PC-3 (cell line): ENCODE measurements at regions of chr2 and their contacts with region 1.

Region 1: GRCh38 chr2:168758970-168759820 is 43.2 kb upstream of the NOSTRIN start:
- DNase-seq: peak; percentile 71
- ATAC-seq: peak; percentile 92
- H3K4me3 ChIP-seq: no peak overlapping the region
- H3K27ac ChIP-seq: no peak overlapping the region
- H3K4me1 ChIP-seq: no peaks in the 10 kb centered on the region
- H3K27me3 ChIP-seq: no peaks in the 10 kb centered on the region
- CTCF ChIP-seq: peak; percentile 73

Region 2: GRCh38 chr2:168375195-168375798 is 383.9 kb before region 1 on chr2:
- CTCF ChIA-PET with region 1: no interaction called
- POLR2A ChIA-PET with region 1: no interaction called
- intact Hi-C with region 1: loop called (anchors 1 kb)
- DNase-seq: peak; percentile 45
- ATAC-seq: no peak
- H3K4me3 ChIP-seq: no peak overlapping the region
- H3K27ac ChIP-seq: no peak overlapping the region
- H3K4me1 ChIP-seq: no peaks in the 10 kb centered on the region
- H3K27me3 ChIP-seq: no peaks in the 10 kb centered on the region
- CTCF ChIP-seq: peak; percentile 72

Region 3: DNA sequence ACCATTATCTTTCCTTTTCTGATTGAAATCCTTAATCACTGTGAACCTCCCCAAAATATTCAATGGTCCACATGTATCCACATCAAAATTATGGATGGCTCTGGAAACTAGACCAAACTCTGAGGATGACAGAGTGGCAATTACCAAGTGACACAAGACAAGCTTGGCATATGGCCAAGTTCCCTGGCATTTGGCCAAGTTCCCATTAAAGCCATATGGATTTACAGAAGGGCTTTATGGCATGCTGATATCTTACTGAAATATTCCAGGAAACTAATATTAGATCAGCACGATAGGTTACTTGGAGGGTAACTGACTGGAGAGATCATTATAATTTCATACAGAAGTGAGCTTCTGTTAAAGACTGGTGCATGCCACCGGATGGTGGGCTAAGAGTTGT is 325.0 kb before region 1 on chr2:
- CTCF ChIA-PET with region 1: no interaction called
- POLR2A ChIA-PET with region 1: no interaction called
- intact Hi-C with region 1: loop called (anchors 10 kb)
- DNase-seq: peak; percentile 12
- ATAC-seq: no peak
- H3K4me3 ChIP-seq: no peak overlapping the region
- H3K27ac ChIP-seq: no peak overlapping the region
- H3K4me1 ChIP-seq: no peaks in the 10 kb centered on the region
- H3K27me3 ChIP-seq: no peaks in the 10 kb centered on the region
- CTCF ChIP-seq: no peak

Region 4: GRCh38 chr2:168699844-168700417 is 59.3 kb before region 1 on chr2:
- CTCF ChIA-PET with region 1: no interaction called
- POLR2A ChIA-PET with region 1: no interaction called
- intact Hi-C with region 1: loop called (anchors 5 kb)
- DNase-seq: no peak
- ATAC-seq: no peak
- H3K4me3 ChIP-seq: no peak overlapping the region
- H3K27ac ChIP-seq: no peak overlapping the region
- H3K4me1 ChIP-seq: no peaks in the 10 kb centered on the region
- H3K27me3 ChIP-seq: no peaks in the 10 kb centered on the region
- CTCF ChIP-seq: no peak

Region 5: DNA sequence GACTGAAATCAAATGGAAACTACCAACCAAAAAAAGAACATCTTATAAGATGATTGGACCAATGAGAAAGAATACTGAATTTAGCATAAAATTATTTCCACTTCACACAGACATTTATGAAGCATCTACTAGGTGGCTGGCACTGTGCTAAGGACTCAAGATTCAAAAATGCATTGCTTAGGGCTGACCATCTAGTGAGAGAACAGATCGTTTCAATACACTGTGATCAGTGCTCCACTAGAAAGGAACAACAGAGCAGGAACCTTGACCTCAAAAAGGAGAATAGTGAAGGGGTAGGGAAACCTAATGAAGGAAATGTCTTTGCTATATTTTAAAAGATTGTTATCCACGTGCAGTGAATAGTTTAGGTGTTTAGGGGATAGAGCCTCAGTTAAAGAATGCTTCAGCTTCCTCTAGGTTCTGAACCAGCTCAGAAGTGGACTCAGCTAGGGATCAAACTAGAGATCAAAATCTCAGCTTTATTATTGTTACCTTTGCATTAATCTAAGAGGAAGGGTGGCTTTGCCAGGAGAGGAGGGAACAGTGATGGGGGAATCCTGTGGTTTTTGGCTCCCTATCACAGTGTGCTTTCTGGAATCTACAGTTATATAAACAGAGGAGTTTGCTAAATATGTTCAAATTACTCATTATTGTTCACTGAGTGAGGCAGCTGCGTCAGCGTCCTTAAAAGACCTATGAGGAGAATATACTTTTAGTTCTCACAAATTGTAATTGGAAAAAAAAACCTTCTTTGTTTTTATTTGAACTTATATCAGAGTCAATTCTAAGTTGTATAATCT is 703.9 kb after region 1 on chr2:
- CTCF ChIA-PET with region 1: no interaction called
- POLR2A ChIA-PET with region 1: no interaction called
- intact Hi-C with region 1: no loop called
- DNase-seq: peak; percentile 69
- ATAC-seq: peak; percentile 96
- H3K4me3 ChIP-seq: no peak overlapping the region
- H3K27ac ChIP-seq: peak overlapping the region; percentile 19; the same call in 1 of the 2 replicates
- H3K4me1 ChIP-seq: peaks cover 13% of the 10 kb centered on the region
- H3K27me3 ChIP-seq: no peaks in the 10 kb centered on the region
- CTCF ChIP-seq: no peak